ENCODE measurements at regions of chr19 and their contacts with region 1.

Region 1: GRCh38 chr19:58475714-58476497 is at the start of gene ZNF446:
- DNase-seq: peak; percentile 97
- H3K4me3 Mint-ChIP-seq: peak within 1 kb of the TSS; percentile 88
- H3K27ac Mint-ChIP-seq: peak within 1 kb of the TSS; percentile 99
- H3K4me1 Mint-ChIP-seq: peaks cover 18% of the 10 kb centered on the region
- H3K27me3 Mint-ChIP-seq: no peaks in the 10 kb centered on the region
- total RNA-seq, gene ZNF446: 6.6 and 6.9 TPM in 2 replicates

Region 2: GRCh38 chr19:58492265-58492664 is 16.4 kb after region 1 on chr19:
- intact Hi-C with region 1: loop called (anchors 1 kb)
- DNase-seq: no peak
- H3K4me3 Mint-ChIP-seq: no peak overlapping the region
- H3K27ac Mint-ChIP-seq: no peak overlapping the region
- H3K4me1 Mint-ChIP-seq: peaks cover 16% of the 10 kb centered on the region
- H3K27me3 Mint-ChIP-seq: no peaks in the 10 kb centered on the region

Region 3: DNA sequence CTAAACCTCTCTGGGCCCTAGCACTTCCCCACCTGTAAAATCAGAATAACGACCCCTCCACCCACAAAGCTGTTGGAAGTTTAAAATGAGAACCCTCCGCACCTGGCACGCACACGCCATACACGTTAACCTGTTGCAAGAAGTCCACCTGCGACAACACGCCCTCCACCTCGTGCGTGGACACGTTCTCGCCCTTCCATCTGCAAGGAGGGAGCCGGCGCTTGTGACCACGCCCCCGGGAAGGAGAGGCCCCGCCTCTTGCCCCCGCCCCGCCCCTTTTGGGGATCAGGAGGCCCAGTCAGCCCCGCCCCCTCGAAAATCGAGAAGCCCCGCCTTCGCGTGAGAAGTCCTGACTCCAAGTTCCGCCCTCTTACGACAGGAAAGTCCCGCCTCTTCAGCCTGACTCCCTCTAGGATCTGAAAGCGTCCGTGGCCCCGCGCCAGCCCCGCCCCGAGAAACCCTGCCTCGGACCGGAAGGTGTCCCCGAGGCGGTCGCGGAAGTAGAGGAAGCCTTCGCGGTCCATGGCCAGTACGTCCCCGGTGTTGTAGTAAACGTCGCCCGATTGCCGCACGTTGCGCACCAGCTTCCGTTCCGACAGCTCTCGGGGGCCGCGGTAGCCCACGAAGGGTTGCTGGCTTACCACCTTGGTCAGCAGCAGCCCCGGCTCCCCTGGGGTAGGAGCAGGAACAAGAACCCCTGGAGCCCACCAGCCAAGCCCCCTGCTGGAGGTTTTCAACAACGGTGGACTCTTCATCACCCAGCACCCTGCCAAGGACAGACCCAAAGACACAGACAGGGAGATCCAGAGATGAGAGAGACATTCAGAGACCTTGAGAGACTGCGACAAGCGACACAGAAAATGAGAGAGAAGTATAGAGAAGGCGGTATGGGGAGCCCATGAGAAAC is 23.4 kb after region 1 on chr19:
- intact Hi-C with region 1: loop called (anchors 1 kb)
- DNase-seq: peak; percentile 96
- H3K4me3 Mint-ChIP-seq: peak overlapping the region; percentile 99
- H3K27ac Mint-ChIP-seq: peak overlapping the region; percentile 97
- H3K4me1 Mint-ChIP-seq: peaks cover 21% of the 10 kb centered on the region
- H3K27me3 Mint-ChIP-seq: no peaks in the 10 kb centered on the region